Right ventricle myocardium superior (tissue), 1 donor: ENCODE measurements at regions of chr2 and their contacts with region 1.

Region 1: DNA sequence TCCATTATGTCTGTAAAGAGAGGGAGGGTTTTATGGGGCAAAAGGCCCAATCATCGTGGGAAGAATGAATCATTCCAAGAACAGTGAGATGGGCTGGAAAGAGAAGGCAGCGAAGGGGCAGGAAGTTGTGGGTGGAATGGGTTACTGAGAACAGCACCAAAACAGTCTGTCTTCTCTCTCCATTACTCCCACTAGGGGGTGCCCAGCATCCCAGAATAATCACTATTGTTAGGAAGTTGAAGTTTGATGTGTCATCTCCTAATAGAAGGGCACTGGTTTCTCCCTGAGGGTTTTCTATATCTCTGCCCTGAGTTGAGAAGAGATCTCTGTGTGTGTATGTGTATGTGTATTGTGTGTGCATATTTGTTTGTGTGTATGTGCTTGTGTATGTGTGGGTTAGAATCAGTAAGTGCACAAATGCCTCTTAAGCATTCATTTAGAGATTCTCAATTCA is 76.6 kb upstream of the MAP4K3 start:
- DNase-seq: no peak
- ATAC-seq: peak; percentile 40

Region 2: DNA sequence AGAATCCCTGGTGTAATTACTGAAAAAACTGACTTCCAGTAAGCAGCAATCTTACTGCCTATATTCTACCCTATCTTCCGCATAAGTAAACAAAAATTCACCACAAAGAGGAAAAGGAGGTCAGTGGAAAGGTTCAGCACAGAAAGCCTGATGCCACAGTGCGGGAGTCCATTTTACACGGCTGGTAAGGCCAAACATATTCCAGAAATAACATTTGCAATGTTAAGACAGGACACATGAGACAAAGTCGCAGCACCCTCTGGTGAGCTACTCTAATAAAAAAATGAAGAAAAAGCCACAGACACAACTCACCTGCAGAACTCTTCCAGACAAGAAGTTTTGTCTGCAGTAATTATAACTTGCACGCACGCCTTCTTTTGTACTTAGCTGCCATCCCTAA is 695.1 kb before region 1 on chr2:
- intact Hi-C with region 1: no loop called
- DNase-seq: no peak
- ATAC-seq: no peak

Region 3: GRCh38 chr2:39469807-39470206 is 43.9 kb before region 1 on chr2:
- intact Hi-C with region 1: loop called (anchors 2 kb)
- DNase-seq: no peak
- ATAC-seq: peak; percentile 74

Region 4: GRCh38 chr2:39631718-39632117 is 118.0 kb after region 1 on chr2:
- intact Hi-C with region 1: no loop called
- DNase-seq: no peak
- ATAC-seq: peak; percentile 39